ENCODE measurements at regions of chr3 and their contacts with region 1.

Region 1: GRCh38 chr3:9396700-9397521 is 504 bp upstream of the SETD5 start:
- DNase-seq: peak; percentile 99
- ATAC-seq: peak; percentile 74
- H3K4me3 Mint-ChIP-seq: peak overlapping the region; percentile 93
- H3K27ac Mint-ChIP-seq: peak overlapping the region; percentile 98
- H3K4me1 Mint-ChIP-seq: peaks cover 63% of the 10 kb centered on the region
- H3K27me3 Mint-ChIP-seq: no peaks in the 10 kb centered on the region

Region 2: GRCh38 chr3:9362731-9363530 is 34.0 kb before region 1 on chr3 and contains the start of gene THUMPD3:
- CTCF ChIA-PET with region 1: interaction called, 8 read pairs
- POLR2A ChIA-PET with region 1: interaction called, 81 read pairs
- intact Hi-C with region 1: loop called (anchors 1 kb)
- DNase-seq: peak; percentile 96
- ATAC-seq: peak; percentile 93
- H3K4me3 Mint-ChIP-seq: peak within 1 kb of the TSS; percentile 98
- H3K27ac Mint-ChIP-seq: peak within 1 kb of the TSS; percentile 100
- H3K4me1 Mint-ChIP-seq: peaks cover 21% of the 10 kb centered on the region
- H3K27me3 Mint-ChIP-seq: no peaks in the 10 kb centered on the region
- total RNA-seq, gene THUMPD3: 59.6 to 74.3 TPM

Region 3: DNA sequence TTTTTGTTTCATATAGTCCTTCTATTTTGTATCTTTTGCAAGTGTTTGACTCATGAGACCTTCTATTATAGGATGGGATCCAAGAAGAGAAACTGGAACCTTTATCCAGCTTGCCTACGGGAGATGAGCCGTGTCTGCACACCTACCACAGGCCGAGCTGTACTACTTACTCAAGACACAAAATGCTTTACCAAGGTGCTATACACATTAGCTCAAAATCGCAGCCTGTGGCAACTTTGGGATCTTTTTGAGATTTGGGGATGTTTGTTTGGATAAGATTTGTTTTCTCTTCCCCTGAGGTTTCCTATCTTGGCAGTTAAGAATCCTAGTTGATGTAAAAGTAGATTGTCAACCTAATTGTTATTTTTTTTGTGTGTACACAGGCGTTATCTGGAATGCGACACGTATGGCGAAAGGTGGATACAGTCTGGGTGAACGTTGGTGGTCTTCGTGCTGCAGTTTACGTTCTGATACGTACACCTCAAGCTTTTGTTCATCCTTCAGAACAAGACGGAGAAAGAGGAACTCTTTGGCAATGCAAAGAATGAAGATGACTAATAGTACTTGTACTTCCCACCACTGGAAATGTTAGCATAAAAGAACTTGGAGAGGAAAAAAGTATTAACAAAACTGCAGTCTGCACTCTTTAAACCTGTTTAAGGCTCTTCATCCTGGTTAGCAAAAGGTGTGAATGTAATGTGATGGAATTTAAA is 12.6 kb before region 1 on chr3:
- CTCF ChIA-PET with region 1: interaction called, 7 read pairs
- POLR2A ChIA-PET with region 1: interaction called, 10 read pairs
- intact Hi-C with region 1: no loop called
- DNase-seq: no peak
- ATAC-seq: peak; percentile 29
- H3K4me3 Mint-ChIP-seq: no peak overlapping the region
- H3K27ac Mint-ChIP-seq: peak overlapping the region; percentile 40
- H3K4me1 Mint-ChIP-seq: peaks cover 19% of the 10 kb centered on the region
- H3K27me3 Mint-ChIP-seq: no peaks in the 10 kb centered on the region

Region 4: DNA sequence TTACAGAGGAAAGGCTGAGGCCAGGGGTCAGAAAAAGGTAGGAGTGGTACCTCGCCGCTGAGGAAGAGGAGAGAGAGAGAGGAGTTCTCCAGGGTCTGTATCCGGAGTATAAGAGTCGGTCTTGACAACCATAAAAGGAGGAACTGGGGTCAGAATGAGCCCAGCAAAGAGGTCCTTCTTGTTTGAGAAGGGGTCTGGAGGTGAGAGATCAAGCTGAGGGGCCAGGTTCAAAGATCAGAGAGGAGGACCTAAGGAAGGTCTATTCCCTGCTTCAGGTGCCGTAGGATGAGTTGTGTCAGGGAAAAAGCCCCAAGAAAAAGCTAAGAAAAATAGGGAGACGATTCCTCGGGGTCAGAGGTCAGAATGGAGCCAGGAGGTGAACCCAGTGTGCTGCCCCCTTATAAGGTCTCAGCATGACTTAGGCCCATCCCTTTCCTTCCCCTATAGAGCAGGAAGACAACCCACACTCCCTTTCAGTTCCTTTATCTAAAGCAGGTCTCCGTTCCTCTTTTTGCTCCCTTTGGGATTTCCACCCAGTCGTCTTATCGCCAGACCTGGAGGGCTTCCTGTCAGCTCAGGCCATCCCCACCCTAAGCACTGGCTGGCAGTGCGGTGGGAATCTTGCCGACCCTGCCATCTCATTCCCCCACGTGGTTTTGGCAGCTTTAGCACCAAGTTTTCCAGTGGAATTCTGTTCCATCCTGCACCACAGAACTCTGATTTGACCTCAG is 253.0 kb after region 1 on chr3:
- CTCF ChIA-PET with region 1: no interaction called
- POLR2A ChIA-PET with region 1: no interaction called
- intact Hi-C with region 1: loop called in 1 of 2 experiments (anchors 1 kb)
- DNase-seq: no peak
- ATAC-seq: peak; percentile 1
- H3K4me3 Mint-ChIP-seq: peak overlapping the region; percentile 95
- H3K27ac Mint-ChIP-seq: peak overlapping the region; percentile 92
- H3K4me1 Mint-ChIP-seq: peaks cover 24% of the 10 kb centered on the region
- H3K27me3 Mint-ChIP-seq: no peaks in the 10 kb centered on the region

Region 5: DNA sequence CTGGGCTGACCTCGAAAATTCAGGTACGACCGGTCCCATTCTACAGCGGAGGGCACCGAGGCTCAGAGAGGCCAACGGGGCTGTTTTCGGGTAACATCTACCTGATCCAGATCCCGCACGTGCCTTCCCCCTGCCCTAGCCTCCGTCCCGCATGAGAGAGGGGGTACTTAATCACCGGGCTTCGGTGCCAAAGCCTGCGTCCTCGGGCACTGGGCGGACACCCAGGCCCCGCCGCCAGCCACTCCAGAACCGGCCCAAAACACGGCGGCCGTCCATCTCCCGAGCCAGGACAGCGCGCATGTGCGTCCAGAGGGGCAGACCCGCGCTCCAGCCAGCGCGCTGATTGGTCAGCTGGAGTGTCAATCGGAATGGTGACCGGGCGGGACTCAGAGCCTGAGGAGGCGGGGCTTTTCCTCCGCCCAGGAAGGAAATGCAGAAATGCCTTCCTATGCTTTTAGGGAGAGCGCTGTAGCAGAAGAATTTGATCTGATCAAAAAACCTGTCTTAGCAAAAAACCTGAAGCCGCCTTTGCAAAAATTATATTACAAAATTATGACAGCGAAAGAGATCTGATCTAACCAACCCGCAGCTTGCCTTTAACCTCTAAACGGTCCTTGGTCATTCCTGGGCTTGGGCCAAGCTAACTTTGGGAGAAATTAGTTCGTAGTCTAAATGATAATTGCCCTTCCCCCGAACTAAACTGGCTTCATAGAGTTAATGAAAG is 447.0 kb after region 1 on chr3 and contains the start of gene RPUSD3:
- CTCF ChIA-PET with region 1: no interaction called
- POLR2A ChIA-PET with region 1: interaction called, 3 read pairs
- intact Hi-C with region 1: loop called in 1 of 2 experiments (anchors 5 kb)
- DNase-seq: peak; percentile 98
- ATAC-seq: peak; percentile 97
- H3K4me3 Mint-ChIP-seq: peak within 1 kb of the TSS; percentile 99
- H3K27ac Mint-ChIP-seq: peak within 1 kb of the TSS; percentile 96
- H3K4me1 Mint-ChIP-seq: peaks cover 28% of the 10 kb centered on the region
- H3K27me3 Mint-ChIP-seq: no peaks in the 10 kb centered on the region
- total RNA-seq, gene RPUSD3: 79.2 to 81.5 TPM

Region 6: GRCh38 chr3:10026084-10026890 is 629.4 kb after region 1 on chr3 and contains the start of gene FANCD2:
- CTCF ChIA-PET with region 1: no interaction called
- POLR2A ChIA-PET with region 1: no interaction called
- intact Hi-C with region 1: loop called in 1 of 2 experiments (anchors 1 kb)
- DNase-seq: peak; percentile 95
- ATAC-seq: peak; percentile 91
- H3K4me3 Mint-ChIP-seq: peak within 1 kb of the TSS; percentile 95
- H3K27ac Mint-ChIP-seq: peak within 1 kb of the TSS; percentile 99
- H3K4me1 Mint-ChIP-seq: peaks cover 25% of the 10 kb centered on the region
- H3K27me3 Mint-ChIP-seq: no peaks in the 10 kb centered on the region
- total RNA-seq, gene FANCD2: 86.4 to 87.7 TPM